Activated CD4-positive, alpha-beta memory T cell treated with anti-CD3 and anti-CD28 coated beads for 36 hours (primary cell): ENCODE measurements at regions of chr2 and their contacts with region 1.

Region 1: GRCh38 chr2:38274286-38275276 is 102.5 kb downstream of the ATL2 start:
- DNase-seq: peak; percentile 22
- H3K4me3 Mint-ChIP-seq: no peak overlapping the region
- H3K27ac Mint-ChIP-seq: no peak overlapping the region
- H3K4me1 Mint-ChIP-seq: peaks cover 4% of the 10 kb centered on the region
- H3K27me3 Mint-ChIP-seq: peaks cover 1% of the 10 kb centered on the region

Region 2: DNA sequence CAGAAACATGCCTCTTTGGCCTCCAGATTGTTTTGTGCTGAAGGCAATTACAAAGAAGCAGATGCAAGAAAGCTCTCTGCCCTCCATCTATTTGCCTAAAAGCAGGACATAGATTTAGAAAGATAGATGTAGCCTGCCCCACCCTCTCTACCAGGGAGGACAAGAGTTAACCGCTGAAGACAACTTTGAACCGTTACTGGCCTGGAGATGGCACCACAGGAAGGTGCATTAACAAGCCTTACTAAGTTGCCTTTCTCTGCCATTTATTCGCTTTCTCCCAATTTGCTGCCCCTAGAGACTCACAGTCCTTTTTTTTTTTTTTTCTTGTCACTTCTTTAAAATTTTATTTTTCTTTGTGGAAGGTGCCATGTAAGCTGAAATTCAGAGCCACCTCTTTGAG is 378.3 kb before region 1 on chr2:
- CTCF ChIA-PET with region 1: interaction called, 4 read pairs
- POLR2A ChIA-PET with region 1: no interaction called
- intact Hi-C with region 1: loop called (anchors 1 kb)
- DNase-seq: no peak
- H3K4me3 Mint-ChIP-seq: no peak overlapping the region
- H3K27ac Mint-ChIP-seq: no peak overlapping the region
- H3K4me1 Mint-ChIP-seq: peaks cover 35% of the 10 kb centered on the region
- H3K27me3 Mint-ChIP-seq: no peaks in the 10 kb centered on the region

Region 3: DNA sequence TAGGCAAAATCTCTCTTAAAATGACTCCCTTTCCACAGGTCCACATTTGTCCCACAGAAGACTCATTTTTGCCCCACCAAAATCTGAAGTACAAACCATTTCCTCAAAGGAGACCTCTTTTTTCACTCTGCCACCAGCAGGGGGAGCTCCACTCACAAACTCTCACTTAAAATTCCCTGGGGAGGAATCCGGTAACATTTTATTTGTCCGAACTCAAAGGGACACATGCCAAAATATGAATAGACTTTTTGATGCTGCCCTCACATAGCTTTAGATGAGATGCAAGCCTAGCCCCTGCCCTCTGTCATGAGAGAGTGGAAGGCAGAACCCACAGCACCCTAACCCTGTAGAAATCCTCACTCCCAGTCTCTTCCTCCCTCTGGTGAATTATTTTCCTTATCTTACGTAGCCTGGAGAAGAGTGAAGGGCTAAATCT is 292.4 kb before region 1 on chr2:
- CTCF ChIA-PET with region 1: interaction called, 20 read pairs
- POLR2A ChIA-PET with region 1: no interaction called
- intact Hi-C with region 1: loop called (anchors 2 kb)
- DNase-seq: peak; percentile 68
- H3K4me3 Mint-ChIP-seq: no peak overlapping the region
- H3K27ac Mint-ChIP-seq: no peak overlapping the region
- H3K4me1 Mint-ChIP-seq: no peaks in the 10 kb centered on the region
- H3K27me3 Mint-ChIP-seq: peaks cover 2% of the 10 kb centered on the region

Region 4: DNA sequence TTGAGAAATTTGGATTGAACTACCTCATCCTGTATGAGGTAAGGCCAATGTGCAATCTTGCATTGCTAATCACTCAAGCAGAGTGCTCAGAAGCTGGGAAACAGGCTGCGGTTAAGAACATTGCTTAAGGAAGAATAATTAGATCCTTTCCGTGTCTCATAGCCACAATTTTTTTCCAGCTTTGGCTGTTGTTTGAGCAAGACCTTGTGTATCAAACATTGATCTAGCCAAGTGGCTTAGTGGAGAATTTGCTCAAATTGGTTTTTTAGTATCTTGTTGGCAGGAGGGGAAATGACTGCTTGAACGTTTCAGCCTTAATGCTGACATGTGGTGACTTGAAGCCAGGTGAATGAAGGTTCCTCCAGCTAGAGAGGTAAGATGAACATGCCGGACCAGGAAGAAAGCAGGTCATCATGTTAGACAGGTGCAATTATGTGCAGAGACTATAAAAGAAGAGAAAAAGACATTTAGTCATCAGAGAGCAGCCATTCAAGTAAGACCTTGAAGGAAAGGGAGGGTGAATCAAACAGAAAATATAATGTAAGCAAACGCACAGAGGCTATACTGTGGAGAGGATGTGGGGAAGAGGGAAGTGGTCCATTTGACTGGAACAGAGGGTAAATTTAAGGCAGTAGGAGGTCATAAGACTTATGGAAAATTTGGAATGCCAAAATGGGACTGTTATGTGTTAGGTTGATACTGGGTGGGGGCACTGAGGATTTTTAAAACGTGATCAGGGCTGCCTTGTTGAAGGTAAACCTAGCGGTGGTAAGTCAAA is 99.7 kb before region 1 on chr2:
- CTCF ChIA-PET with region 1: no interaction called
- POLR2A ChIA-PET with region 1: no interaction called
- intact Hi-C with region 1: no loop called
- DNase-seq: no peak
- H3K4me3 Mint-ChIP-seq: no peak overlapping the region
- H3K27ac Mint-ChIP-seq: no peak overlapping the region
- H3K4me1 Mint-ChIP-seq: no peaks in the 10 kb centered on the region
- H3K27me3 Mint-ChIP-seq: peaks cover 23% of the 10 kb centered on the region

Region 5: DNA sequence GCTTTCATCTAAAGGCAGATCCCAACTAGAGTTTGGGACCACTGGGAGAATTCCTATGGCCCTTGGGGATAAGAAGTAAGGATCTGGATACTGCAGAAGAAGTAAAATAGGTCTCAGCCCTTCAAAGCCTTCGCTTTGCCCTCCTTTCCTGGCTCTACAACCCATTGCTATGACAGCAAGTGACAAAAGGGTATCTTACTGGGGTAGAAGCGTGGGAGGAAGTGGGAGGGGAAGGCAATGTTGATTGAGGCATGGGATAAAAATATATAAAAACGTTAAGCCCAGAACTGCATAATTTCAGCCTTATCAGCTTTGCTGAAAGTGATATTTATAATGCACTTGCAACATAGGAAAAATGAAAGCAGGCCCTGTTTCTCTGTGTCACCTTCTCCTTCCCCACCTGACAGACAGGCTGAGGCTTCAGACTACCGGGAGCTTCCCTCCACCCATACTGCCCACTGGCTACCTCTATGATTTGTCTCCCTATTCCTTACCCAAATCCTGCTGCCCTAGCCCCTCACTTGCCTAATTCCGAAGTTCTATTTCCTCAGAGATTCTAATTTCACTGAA is 861.2 kb after region 1 on chr2:
- CTCF ChIA-PET with region 1: no interaction called
- POLR2A ChIA-PET with region 1: no interaction called
- intact Hi-C with region 1: no loop called
- DNase-seq: no peak
- H3K4me3 Mint-ChIP-seq: peak overlapping the region; percentile 14
- H3K27ac Mint-ChIP-seq: peak overlapping the region; percentile 30
- H3K4me1 Mint-ChIP-seq: peaks cover 53% of the 10 kb centered on the region
- H3K27me3 Mint-ChIP-seq: no peaks in the 10 kb centered on the region